Activated CD8-positive, alpha-beta T cell treated with anti-CD3 and anti-CD28 coated beads, Interleukin-2, amount 10 ng/mL, durations not matched to agents 7 days and 5 days (primary cell): ENCODE measurements at regions of chr22 and their contacts with region 1.

Region 1: DNA sequence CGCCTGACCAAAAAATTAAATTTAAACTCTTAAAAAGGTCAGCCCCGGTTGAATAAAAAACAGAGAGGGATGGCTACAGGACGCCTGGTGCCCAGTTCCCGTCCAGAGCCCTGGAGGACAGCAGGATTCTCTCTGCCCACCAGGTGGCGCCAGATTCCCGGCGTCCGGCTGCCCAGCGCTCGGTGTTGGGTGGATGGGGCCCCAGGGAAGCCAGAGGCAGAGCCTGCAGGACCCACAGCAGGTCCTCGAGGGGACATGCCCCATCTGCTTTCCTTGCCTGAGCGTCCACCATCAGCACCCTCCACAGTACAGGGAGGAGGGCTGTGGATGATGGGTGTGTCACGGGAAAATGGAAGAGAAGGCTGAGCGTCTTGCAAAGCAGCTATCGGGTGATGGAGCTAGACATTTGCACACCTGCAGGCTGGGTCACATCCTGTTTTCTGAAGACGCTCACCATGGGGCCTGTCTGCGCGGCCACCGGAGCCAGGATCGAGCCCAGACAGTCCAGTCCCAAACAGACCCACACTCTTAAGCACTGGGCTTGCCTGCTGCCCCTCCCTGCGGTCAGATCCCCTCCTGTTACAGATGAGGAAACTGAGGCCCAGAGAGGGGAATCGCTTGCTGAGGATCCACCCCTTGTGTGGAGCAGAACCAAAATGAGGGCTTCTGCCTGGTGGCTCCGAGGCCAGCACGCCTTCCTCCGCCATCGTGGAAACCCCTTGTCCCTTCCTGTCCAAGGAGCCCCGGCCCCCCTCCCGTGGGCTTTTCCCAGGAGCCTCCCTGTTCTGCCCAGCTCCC is 18.5 kb upstream of the CBX7 start:
- DNase-seq: peak; percentile 88
- ATAC-seq: peak; percentile 78
- H3K4me3 Mint-ChIP-seq: peak overlapping the region; percentile 66
- H3K27ac Mint-ChIP-seq: peak overlapping the region; percentile 79
- H3K4me1 Mint-ChIP-seq: peaks cover 43% of the 10 kb centered on the region
- H3K27me3 Mint-ChIP-seq: peaks cover 12% of the 10 kb centered on the region

Region 2: DNA sequence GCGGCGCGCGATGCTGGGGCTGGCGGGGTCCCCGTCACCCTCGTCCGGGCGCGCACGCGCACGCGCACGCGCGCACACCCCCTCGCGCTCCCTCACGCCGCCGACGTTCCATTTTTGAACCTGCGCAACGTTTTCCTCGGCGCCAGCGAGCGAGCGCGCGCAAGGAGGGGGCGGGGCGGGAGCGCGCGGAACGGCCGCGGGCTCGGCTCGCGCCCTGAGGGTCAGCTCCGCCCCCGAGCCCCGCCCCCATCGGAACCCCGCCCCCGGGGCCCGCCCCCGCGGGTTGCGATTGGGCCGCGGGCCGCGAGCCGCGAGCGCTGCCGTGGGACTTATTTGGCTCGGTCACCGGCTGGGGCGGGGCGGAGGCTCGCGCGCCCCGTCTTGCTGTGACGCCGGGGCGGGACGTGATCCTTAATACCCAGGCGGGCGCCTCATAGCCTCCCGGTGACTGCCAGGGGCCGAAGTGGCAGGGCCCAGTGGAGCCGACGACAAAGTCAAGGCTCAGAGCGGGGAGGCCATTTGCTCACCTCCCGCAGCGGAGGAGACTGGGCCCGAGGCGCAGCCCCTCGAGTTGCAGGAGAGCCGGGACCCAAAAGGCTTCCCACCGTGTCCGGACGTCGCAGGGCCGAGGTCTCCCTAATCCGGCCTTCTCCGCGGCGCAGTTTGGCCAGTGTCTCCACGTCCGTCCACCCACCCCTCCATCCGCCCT is 18.4 kb before region 1 on chr22 and contains the start of gene CBX7:
- CTCF ChIA-PET with region 1: interaction called, 29 read pairs
- POLR2A ChIA-PET with region 1: no interaction called
- DNase-seq: peak; percentile 93
- ATAC-seq: peak; percentile 94
- H3K4me3 Mint-ChIP-seq: peak within 1 kb of the TSS; percentile 79
- H3K27ac Mint-ChIP-seq: peak within 1 kb of the TSS; percentile 77
- H3K4me1 Mint-ChIP-seq: peaks cover 34% of the 10 kb centered on the region
- H3K27me3 Mint-ChIP-seq: peaks cover 19% of the 10 kb centered on the region
- total RNA-seq, gene CBX7: 8.6 to 8.7 TPM

Region 3: DNA sequence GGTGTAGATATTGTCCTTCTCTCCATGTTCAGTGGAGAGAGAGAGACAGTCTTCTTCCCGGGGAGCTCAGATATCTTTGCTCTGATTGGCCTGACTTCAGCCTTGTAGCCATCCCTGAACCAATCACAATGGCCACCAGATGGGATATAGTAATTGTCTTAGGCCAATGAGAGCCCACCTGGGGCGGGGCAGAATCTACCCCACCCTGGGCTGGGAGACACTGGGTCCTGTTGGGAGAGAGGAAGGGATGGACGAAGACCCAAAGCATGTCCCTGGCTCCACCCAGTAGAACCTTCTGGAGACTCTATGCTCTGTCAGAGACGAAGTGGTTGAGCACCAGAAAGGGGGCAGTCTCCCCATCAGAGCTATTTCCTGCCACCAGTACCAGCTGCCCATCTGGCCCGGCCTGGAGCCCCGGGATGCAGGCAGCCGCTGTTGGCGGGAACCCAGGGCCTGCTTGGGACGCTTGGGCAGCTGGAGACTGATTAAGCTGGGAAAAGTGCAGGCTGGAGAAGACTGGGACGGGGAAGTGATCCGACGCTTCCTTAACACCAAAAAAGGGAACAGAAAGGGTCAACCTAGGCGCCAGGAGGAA is 13.1 kb after region 1 on chr22:
- CTCF ChIA-PET with region 1: interaction called, 17 read pairs
- POLR2A ChIA-PET with region 1: no interaction called
- DNase-seq: no peak
- ATAC-seq: no peak
- H3K4me3 Mint-ChIP-seq: no peak overlapping the region
- H3K27ac Mint-ChIP-seq: no peak overlapping the region
- H3K4me1 Mint-ChIP-seq: no peaks in the 10 kb centered on the region
- H3K27me3 Mint-ChIP-seq: peaks cover 10% of the 10 kb centered on the region

Region 4: GRCh38 chr22:39215426-39216120 is 44.5 kb after region 1 on chr22:
- CTCF ChIA-PET with region 1: interaction called, 12 read pairs
- POLR2A ChIA-PET with region 1: no interaction called
- DNase-seq: no peak
- ATAC-seq: no peak
- H3K4me3 Mint-ChIP-seq: no peak overlapping the region
- H3K27ac Mint-ChIP-seq: no peak overlapping the region
- H3K4me1 Mint-ChIP-seq: peaks cover 3% of the 10 kb centered on the region
- H3K27me3 Mint-ChIP-seq: peaks cover 33% of the 10 kb centered on the region

Region 5: GRCh38 chr22:39236321-39237317 is 65.6 kb after region 1 on chr22:
- CTCF ChIA-PET with region 1: interaction called, 23 read pairs
- POLR2A ChIA-PET with region 1: no interaction called
- DNase-seq: peak; percentile 73
- ATAC-seq: peak; percentile 62
- H3K4me3 Mint-ChIP-seq: no peak overlapping the region
- H3K27ac Mint-ChIP-seq: no peak overlapping the region
- H3K4me1 Mint-ChIP-seq: peaks cover 56% of the 10 kb centered on the region
- H3K27me3 Mint-ChIP-seq: peaks cover 63% of the 10 kb centered on the region

Region 6: GRCh38 chr22:39306581-39307361 is 135.7 kb after region 1 on chr22:
- CTCF ChIA-PET with region 1: interaction called, 129 read pairs
- POLR2A ChIA-PET with region 1: interaction called, 11 read pairs
- DNase-seq: peak; percentile 73
- ATAC-seq: peak; percentile 30
- H3K4me3 Mint-ChIP-seq: no peak overlapping the region
- H3K27ac Mint-ChIP-seq: no peak overlapping the region
- H3K4me1 Mint-ChIP-seq: peaks cover 16% of the 10 kb centered on the region
- H3K27me3 Mint-ChIP-seq: no peaks in the 10 kb centered on the region

Region 7: DNA sequence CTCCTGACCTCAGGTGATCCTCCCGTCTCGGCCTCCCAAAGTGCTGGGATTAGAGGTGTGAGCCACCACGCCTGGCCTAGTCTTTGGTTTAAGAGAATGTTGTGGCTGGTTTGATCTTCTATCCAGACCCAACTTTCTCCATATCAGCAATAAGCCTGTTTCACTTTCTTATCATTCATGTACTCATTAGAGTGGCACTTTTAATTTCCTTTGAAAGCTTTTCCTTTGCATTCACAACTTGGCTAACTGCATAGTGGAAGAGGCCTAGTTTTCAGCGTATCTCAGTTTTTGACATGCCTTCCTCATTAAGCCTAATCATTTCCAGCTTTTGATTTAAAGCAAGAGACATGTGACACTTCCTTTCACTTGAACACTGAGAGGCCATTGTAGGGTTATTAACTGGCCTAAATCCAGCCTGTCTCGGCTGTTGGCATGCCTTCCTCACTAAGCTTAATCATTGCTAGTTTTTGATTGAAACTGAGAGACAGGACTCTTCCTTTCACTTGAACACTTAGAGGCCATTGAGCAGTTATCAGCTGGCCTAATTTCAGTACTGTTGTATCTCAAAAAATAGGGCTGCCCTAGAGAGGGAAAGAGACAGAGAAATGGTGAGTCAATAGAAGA is 161.5 kb after region 1 on chr22:
- CTCF ChIA-PET with region 1: interaction called, 10 read pairs
- POLR2A ChIA-PET with region 1: no interaction called
- DNase-seq: no peak
- ATAC-seq: no peak
- H3K4me3 Mint-ChIP-seq: no peak overlapping the region
- H3K27ac Mint-ChIP-seq: no peak overlapping the region
- H3K4me1 Mint-ChIP-seq: peaks cover 5% of the 10 kb centered on the region
- H3K27me3 Mint-ChIP-seq: no peaks in the 10 kb centered on the region